ENCODE measurements at regions of chr13 and their contacts with region 1.

Region 1: DNA sequence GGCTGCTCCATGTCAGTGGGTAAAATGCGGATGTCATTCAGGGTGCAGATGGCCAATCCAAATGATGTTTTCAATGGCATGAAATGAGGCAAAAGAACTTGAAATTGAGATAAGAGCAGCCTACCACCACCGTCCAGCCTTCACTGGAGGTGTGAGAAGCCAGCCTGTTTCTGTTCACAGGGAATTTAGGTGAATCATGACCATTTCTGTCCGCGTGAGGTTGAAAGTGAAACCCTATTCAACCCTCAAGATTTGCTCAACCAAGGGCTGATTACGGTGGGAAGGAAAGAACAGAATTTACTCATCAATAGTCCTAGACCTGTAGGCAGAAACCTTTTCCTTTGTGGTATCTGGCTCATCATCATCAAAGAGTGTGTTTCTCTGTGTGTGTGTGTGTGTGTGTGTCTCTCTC is 370.7 kb downstream of the COG6 start:
- DNase-seq: peak; percentile 91
- H3K4me3 Mint-ChIP-seq: peak overlapping the region; percentile 57
- H3K27ac Mint-ChIP-seq: peak overlapping the region; percentile 62
- H3K4me1 Mint-ChIP-seq: peaks cover 35% of the 10 kb centered on the region
- H3K27me3 Mint-ChIP-seq: peaks cover 10% of the 10 kb centered on the region

Region 2: GRCh38 chr13:39942552-39943273 is 83.5 kb before region 1 on chr13:
- intact Hi-C with region 1: loop called (anchors 1 kb)
- DNase-seq: peak; percentile 91
- H3K4me3 Mint-ChIP-seq: no peak overlapping the region
- H3K27ac Mint-ChIP-seq: no peak overlapping the region
- H3K4me1 Mint-ChIP-seq: peaks cover 13% of the 10 kb centered on the region
- H3K27me3 Mint-ChIP-seq: peaks cover 3% of the 10 kb centered on the region

Region 3: DNA sequence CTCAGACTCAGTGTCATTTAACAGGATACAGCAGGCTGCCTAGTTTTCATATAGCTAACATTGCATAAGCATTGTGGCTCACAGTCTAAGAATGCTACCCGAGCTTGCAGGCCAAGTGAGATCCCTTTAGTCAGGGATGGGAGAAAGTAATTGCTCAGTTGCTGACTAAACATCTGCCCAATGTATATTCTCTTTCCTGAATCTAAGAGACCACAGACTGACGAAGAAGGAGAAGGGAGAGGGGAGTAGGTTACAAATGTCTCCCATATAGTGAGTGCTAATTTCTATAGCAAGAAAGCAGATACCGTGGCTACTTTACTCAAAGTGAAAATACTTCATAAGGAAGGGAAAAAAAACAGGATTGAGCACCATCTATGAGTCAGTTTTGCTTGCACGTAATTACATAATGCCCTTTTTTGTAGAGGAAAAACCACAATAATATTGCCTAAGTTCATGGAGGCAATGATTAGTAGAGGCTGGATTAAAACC is 83.2 kb after region 1 on chr13:
- intact Hi-C with region 1: loop called (anchors 1 kb)
- DNase-seq: no peak
- H3K4me3 Mint-ChIP-seq: no peak overlapping the region
- H3K27ac Mint-ChIP-seq: no peak overlapping the region
- H3K4me1 Mint-ChIP-seq: peaks cover 21% of the 10 kb centered on the region
- H3K27me3 Mint-ChIP-seq: no peaks in the 10 kb centered on the region

Region 4: DNA sequence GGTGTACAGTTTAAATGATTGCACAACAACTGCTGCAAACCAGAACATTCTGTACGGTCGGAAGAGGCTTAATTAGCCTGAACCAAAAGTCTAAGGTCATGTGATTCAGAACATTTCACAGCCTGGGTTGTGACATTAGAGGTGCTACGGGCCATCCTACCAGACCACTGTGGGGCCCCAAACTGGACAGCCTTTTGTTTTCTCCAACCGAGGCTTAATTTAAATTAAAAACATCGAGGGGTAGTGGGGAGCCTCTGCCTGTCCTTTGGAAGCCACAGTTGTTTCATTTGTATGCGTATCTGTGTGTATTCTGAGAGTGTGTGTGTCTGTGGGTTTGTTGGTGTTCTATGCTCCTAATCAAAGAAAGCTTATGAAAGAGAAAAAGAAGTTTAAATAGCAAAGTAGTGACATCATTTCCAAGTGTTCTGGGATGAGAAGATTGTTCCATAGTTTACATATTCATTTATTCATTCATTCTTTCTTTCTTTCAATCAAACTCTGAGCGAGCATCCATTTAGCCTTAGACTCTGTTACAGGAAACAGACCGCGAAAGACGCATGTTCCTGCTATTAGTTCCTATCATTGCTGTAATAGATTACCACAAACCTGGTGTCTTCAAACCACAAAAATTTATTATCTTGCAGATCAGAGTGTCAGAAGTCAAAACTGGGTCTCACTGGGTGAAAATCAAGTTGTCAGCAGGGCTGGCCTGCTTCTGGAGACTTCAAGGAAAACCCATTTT is 195.5 kb after region 1 on chr13:
- intact Hi-C with region 1: loop called (anchors 2 kb)
- DNase-seq: peak; percentile 74
- H3K4me3 Mint-ChIP-seq: peak overlapping the region; percentile 49
- H3K27ac Mint-ChIP-seq: peak overlapping the region; percentile 45
- H3K4me1 Mint-ChIP-seq: peaks cover 36% of the 10 kb centered on the region
- H3K27me3 Mint-ChIP-seq: no peaks in the 10 kb centered on the region

Region 5: DNA sequence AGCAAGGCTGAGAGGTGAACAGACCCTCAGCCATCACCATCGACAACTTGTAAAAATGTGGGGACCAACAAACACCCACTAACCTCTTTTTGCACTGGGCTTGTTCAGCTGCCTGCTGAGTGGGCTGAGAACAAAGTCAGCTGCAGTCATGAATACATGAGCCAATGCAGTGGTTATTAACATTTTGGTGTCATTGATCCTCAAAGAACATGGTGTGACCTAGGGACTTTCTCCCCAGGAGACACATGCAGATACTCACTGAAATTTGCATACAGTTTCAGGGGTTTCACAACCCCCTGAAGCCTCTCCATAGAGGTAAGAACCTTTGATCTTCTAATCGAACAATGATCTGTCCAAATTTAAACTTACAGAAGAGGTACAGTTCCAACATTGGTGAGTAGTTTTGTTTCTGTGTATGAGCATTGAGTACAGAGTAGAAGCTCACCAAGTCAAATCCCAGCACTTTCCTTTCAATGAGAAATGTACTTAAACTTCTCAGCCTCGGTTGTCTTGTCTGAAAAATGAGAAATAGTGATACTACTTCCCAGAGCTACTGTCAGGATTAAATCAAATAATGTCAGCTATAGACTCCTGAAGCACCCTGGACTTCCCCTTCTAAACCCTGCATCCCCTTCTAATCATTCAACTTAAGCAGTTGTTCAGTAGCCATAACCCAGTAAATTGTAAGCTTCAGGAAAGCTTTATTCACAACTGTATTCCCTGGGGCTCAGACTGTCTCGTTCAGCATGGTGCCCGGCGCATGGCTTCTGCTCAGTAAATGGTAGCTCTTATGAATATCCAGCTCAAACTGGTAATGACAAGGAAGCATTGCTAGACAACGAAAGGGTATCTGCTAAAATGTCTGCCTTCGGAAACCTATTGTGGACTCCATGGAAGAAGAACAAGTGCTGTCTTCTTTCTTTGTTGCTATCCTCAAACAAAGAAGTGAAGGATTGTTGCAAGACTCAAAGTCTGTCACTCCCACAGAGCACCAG is 491.6 kb after region 1 on chr13:
- intact Hi-C with region 1: loop called (anchors 1 kb)
- DNase-seq: no peak
- H3K4me3 Mint-ChIP-seq: peak overlapping the region; percentile 72
- H3K27ac Mint-ChIP-seq: peak overlapping the region; percentile 92
- H3K4me1 Mint-ChIP-seq: peaks cover 63% of the 10 kb centered on the region
- H3K27me3 Mint-ChIP-seq: no peaks in the 10 kb centered on the region